ENCODE measurements at regions of chr4 and their contacts with region 1.

Region 1: DNA sequence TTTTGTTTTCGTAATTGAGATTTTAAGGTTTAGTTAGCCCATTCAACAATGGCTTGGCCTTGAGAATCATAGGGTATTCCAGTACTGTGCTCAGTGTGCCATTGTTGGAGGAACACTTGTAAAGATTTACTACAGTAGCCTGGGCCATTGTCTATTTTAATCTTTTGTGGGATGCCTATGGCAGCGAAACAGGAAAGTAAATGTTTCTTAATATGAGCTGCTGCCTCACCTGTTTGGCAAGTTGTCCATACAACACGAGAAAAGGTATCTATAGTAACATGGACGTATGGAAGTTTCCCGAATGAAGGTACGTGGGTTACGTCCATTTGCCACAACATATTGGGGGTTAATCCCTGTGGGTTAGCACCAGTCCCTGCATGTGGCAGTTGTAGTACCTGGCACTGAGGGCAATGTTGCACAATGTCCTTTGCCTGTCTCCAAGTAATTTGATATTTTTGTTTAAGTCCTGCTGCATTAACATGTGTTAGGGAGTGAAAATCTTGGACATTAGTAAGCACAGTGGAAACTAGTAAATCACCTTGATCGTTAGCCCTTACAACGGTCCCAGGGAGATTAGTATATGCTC is 38.6 kb upstream of the AADAT start:
- DNase-seq: no peak
- CTCF ChIP-seq: no peak

Region 2: DNA sequence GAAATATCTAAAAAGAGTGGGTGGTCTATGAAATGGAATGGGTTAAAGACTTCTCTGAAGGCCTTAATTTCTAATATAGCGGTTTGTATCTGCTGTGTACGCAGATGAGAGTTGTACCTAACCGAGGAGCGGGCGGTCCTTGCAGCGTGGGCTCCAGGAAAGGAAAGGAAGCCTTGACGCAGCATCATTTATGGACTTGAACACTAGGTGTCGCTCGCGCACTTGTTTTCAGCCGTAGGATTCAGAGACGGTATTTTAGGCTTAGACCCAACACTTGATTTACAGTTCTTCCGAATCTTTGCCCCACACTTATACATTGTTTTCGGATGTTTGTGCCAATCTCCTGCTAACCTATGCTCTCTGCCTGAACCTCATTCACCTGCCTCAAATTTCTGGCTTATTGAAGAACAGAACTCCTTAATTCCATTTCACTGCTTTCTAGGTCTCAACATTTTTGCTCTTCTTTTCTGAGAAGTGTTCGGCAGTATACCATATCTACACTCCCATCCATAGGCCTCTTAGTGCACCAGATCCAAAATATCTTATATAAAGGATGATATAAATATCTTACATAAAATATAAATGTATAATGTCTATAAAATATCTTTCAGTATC is 10.4 kb after region 1 on chr4:
- CTCF ChIA-PET with region 1: interaction called, 11 read pairs
- POLR2A ChIA-PET with region 1: no interaction called
- DNase-seq: peak; percentile 66
- CTCF ChIP-seq: peak; percentile 91

Measured in GM10248 (cell line).